ENCODE measurements at regions of chr17 and their contacts with region 1.

Region 1: GRCh38 chr17:7825206-7825990 is 8.6 kb upstream of the KDM6B start:
- DNase-seq: no peak
- ATAC-seq: no peak
- H3K4me3 ChIP-seq: no peak overlapping the region
- H3K27ac ChIP-seq: no peak overlapping the region
- H3K4me1 ChIP-seq: no peaks in the 10 kb centered on the region
- H3K27me3 ChIP-seq: no peaks in the 10 kb centered on the region
- CTCF ChIP-seq: peak in 1 of 12 donors; percentile 15
- POLR2A ChIP-seq: no peak

Region 2: GRCh38 chr17:7060165-7060891 is 765.1 kb before region 1 on chr17:
- intact Hi-C with region 1: no loop called
- DNase-seq: no peak
- ATAC-seq: no peak
- H3K4me3 ChIP-seq: no peak overlapping the region
- H3K27ac ChIP-seq: no peak overlapping the region
- H3K4me1 ChIP-seq: no peaks in the 10 kb centered on the region
- H3K27me3 ChIP-seq: peaks cover 0 to 13% (median 0%) of the 10 kb centered on the region in 9 donors
- CTCF ChIP-seq: no peak
- POLR2A ChIP-seq: no peak

Region 3: GRCh38 chr17:7745748-7746470 is 79.5 kb before region 1 on chr17:
- intact Hi-C with region 1: loop called in 5 of 10 experiments (anchors 2 to 10 kb)
- DNase-seq: no peak
- ATAC-seq: no peak
- H3K4me3 ChIP-seq: no peak overlapping the region
- H3K27ac ChIP-seq: no peak overlapping the region
- H3K4me1 ChIP-seq: peaks cover 0 to 10% (median 5%) of the 10 kb centered on the region in 12 donors
- H3K27me3 ChIP-seq: peaks cover 0 to 5% (median 0%) of the 10 kb centered on the region in 9 donors
- CTCF ChIP-seq: no peak
- POLR2A ChIP-seq: no peak

Region 4: DNA sequence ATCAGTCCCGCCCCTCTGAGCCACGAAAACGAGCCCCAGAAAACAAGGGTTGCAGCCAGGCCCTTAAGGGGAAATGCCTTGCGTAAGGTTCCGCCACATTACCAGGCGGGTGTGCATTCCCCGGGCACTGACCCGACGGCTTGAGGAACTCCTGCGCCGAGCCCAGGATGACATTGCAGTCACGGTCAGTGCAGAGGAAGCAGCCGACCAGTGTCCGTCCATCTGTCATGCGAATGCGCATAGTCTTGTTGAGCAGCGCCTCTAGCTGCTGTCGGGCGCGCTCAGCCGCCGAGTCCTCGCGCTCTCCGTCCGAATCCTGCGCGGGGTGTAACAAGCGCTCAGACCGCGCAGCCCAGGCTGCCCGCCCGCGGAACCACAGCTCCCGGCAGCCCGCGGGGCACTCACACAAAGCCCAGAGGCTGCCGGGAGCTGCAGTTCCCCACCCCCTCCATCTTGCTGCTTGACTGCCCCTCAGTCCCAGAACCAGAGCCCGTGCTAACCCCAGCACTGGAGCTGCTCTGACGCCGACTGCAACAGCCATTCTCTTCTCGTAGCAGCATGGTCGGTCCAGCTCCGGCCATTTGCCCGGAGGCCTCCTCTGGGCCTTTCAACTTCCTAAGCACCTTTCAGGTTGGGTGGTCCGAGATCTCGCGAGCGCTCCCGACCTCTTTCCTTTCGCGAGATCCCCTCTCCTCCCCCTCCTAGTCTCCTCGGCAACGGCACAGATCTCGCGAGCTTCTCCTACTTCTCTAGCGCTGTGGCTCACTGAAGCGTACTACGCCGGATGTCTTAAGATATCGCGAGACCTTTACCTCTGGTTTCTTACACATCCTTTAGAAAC is 31.7 kb after region 1 on chr17 and contains the start of gene NAA38:
- intact Hi-C with region 1: loop called in 3 of 10 experiments (anchors 2 to 5 kb)
- DNase-seq: peak; percentile 96 to 98 (median 97)
- ATAC-seq: peak; percentile 87 to 90 (median 90)
- H3K4me3 ChIP-seq: peak within 1 kb of the TSS; percentile 39 to 85 (median 68)
- H3K27ac ChIP-seq: peak within 1 kb of the TSS; percentile 74 to 97 (median 92)
- H3K4me1 ChIP-seq: peaks cover 0 to 45% (median 33%) of the 10 kb centered on the region in 12 donors
- H3K27me3 ChIP-seq: no peaks in the 10 kb centered on the region
- CTCF ChIP-seq: peak in 10 of 12 donors; percentile 12 to 74 (median 44)
- POLR2A ChIP-seq: peak in 1 of 2 donors; percentile 32
- total RNA-seq, gene NAA38: 60.9 to 141 (median 72.4) TPM

Region 5: GRCh38 chr17:7897773-7898172 is 72.4 kb after region 1 on chr17:
- intact Hi-C with region 1: loop called in 6 of 10 experiments (anchors 5 to 10 kb)
- DNase-seq: no peak
- ATAC-seq: peak; percentile 65 to 86 (median 72)
- H3K4me3 ChIP-seq: no peak overlapping the region
- H3K27ac ChIP-seq: peak overlapping the region in 1 of 12 donors; percentile 10
- H3K4me1 ChIP-seq: peaks cover 0 to 11% (median 0%) of the 10 kb centered on the region in 12 donors
- H3K27me3 ChIP-seq: no peaks in the 10 kb centered on the region
- CTCF ChIP-seq: peak; percentile 18 to 64 (median 49)
- POLR2A ChIP-seq: no peak

Region 6: GRCh38 chr17:7989781-7990655 is 164.6 kb after region 1 on chr17:
- intact Hi-C with region 1: loop called in 8 of 10 experiments (anchors 2 to 5 kb)
- DNase-seq: peak; percentile 73 to 92 (median 83)
- ATAC-seq: peak; percentile 54 to 87 (median 84)
- H3K4me3 ChIP-seq: peak overlapping the region; percentile 16 to 75 (median 63)
- H3K27ac ChIP-seq: peak overlapping the region in 5 of 12 donors; percentile 8 to 84 (median 62)
- H3K4me1 ChIP-seq: peaks cover 0 to 19% (median 5%) of the 10 kb centered on the region in 12 donors
- H3K27me3 ChIP-seq: peaks cover 0 to 6% (median 0%) of the 10 kb centered on the region in 9 donors
- CTCF ChIP-seq: peak; percentile 93 to 100 (median 95)
- POLR2A ChIP-seq: no peak